PC-9 (cell line): ENCODE measurements at regions of chr11 and their contacts with region 1.

Region 1: GRCh38 chr11:33039274-33040032 is at the start of gene TCP11L1:
- DNase-seq: peak in 1 of 2 experiments; percentile 91
- H3K4me3 ChIP-seq: peak within 1 kb of the TSS; percentile 80
- H3K27ac ChIP-seq: peak within 1 kb of the TSS; percentile 60
- H3K4me1 ChIP-seq: peaks cover 6% of the 10 kb centered on the region
- H3K27me3 ChIP-seq: no peaks in the 10 kb centered on the region
- CTCF ChIP-seq: no peak
- total RNA-seq, gene TCP11L1: 8.1 and 10.3 TPM in 2 replicates

Region 2: DNA sequence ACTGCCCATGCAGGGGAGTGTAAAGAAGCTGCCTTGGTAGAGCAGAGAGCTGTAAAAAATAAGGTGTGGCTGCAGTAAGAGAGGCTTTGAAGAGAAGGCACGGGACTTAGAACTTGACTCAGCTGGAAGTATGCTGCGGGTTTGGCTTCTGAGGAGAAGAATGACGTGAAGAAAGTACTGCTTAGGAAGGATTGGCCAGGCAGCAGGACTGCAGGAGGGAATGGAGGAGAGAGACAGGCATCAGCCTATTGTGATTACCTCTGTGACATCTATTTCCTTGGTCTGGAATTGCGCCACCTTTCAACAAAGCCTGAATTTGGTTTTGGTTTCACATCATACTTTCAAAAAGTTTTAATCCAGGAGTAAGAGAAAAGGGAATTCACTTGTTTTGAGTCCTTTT is 187.2 kb before region 1 on chr11:
- CTCF ChIA-PET with region 1: no interaction called
- POLR2A ChIA-PET with region 1: no interaction called
- intact Hi-C with region 1: no loop called
- DNase-seq: no peak
- H3K4me3 ChIP-seq: no peak overlapping the region
- H3K27ac ChIP-seq: no peak overlapping the region
- H3K4me1 ChIP-seq: no peaks in the 10 kb centered on the region
- H3K27me3 ChIP-seq: no peaks in the 10 kb centered on the region
- CTCF ChIP-seq: no peak

Region 3: DNA sequence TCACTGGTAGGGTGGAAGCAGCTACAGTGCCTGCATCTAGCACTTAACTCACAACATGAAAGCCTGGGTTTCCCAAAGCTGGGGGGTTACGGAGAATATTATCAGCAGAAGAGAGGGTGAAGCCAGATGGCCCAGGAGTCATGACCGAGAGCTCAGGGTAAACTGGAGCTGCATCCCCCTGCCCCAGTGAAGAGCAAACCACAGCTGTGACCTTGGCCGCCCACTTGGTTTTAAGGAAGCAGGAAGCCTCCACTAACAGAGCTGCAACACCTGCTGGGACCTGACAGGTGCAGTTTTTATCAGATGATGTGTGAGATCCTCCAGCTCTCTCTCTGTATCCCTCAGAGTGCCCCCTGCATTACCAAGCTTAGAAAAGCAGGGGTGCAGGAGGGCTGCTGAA is 20.8 kb after region 1 on chr11:
- CTCF ChIA-PET with region 1: no interaction called
- POLR2A ChIA-PET with region 1: interaction called, 13 read pairs
- intact Hi-C with region 1: no loop called
- DNase-seq: no peak
- H3K4me3 ChIP-seq: no peak overlapping the region
- H3K27ac ChIP-seq: no peak overlapping the region
- H3K4me1 ChIP-seq: no peaks in the 10 kb centered on the region
- H3K27me3 ChIP-seq: no peaks in the 10 kb centered on the region
- CTCF ChIP-seq: no peak